ENCODE measurements at regions of chr5 and their contacts with region 1.

Region 1: DNA sequence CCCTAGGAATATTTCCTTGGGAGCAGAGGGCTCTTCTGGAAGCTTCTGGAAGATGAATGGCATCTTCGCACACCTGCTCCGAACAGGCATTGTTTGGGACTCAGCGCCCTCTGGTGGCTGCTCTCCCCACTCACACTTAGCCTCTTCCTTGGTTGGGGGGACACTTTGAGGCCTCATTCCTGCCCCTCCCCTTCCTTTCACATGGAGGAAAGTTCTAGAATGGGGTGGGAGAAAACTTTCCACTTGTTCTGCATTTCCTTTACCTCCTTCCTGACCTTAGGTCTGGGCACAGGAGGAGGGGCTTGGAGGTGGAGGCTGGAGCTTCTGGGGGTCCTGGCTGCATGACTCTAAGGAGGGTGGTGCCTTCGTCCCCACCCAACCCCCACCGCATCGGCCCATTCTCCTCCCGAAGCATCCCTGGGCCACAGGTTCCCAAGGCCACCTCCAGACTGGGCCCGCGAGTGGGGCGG is 19.3 kb upstream of the SMIM32 start:
- DNase-seq: peak; percentile 81
- H3K4me3 ChIP-seq: no peak overlapping the region; a peak in 1 of 4 replicates
- H3K27ac ChIP-seq: no peak overlapping the region
- H3K4me1 ChIP-seq: no peaks in the 10 kb centered on the region
- H3K27me3 ChIP-seq: no peaks in the 10 kb centered on the region
- CTCF ChIP-seq: peak; percentile 94
- EP300 ChIP-seq: no peak; a peak in 1 of 4 replicates
- RAD21 ChIP-seq: peak; percentile 83

Region 2: DNA sequence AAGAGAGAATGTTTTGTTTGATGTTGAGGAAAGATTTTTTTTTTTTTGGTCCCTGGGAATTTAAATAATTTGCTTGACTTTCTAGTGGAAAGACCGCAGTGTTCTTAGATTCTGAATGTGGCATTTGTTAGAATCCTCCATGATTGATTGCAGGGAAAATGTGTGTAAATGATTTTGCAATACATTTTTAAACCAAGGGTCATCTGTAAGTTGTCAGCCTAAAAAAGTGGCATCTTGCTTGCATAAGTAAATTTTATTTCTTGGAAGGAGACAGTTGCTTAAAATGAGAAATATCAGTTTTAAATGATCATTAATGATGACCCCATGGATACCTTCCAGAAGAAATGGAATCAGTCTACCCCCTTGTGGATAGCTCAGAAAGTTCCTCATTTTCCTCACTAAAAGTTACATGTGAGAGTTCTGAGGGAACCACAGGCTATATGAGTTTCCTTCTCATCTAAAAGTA is 482.9 kb before region 1 on chr5:
- CTCF ChIA-PET with region 1: no interaction called
- POLR2A ChIA-PET with region 1: no interaction called
- DNase-seq: no peak
- H3K4me3 ChIP-seq: no peak overlapping the region
- H3K27ac ChIP-seq: no peak overlapping the region
- H3K4me1 ChIP-seq: no peaks in the 10 kb centered on the region
- H3K27me3 ChIP-seq: no peaks in the 10 kb centered on the region
- CTCF ChIP-seq: peak; percentile 36
- EP300 ChIP-seq: no peak
- RAD21 ChIP-seq: peak; percentile 44; the same call in 1 of the 2 replicates

Region 3: DNA sequence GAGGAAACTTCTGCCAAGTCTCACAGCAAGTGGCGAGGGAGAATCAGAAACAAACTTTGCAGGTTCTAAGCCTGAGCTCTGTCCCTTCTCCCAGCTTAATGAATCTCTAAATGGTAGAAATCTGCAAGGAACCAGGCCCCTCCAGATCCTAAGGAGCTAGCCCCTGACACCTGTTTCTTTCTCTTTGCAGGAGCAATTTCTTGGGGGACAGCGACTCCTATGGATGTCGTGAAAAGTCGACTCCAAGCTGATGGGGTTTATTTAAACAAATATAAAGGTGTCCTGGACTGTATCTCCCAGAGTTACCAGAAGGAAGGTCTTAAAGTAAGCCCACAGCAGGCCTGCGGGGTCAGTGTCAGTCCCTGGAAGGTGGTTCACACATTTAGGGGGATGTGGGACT is 338.5 kb before region 1 on chr5:
- CTCF ChIA-PET with region 1: interaction called, 12 read pairs
- POLR2A ChIA-PET with region 1: no interaction called
- DNase-seq: no peak
- H3K4me3 ChIP-seq: no peak overlapping the region
- H3K27ac ChIP-seq: no peak overlapping the region
- H3K4me1 ChIP-seq: peaks cover 0 to 10% of the 10 kb centered on the region in 2 experiments; a peak in 1 of 4 replicates
- H3K27me3 ChIP-seq: no peaks in the 10 kb centered on the region
- CTCF ChIP-seq: no peak
- EP300 ChIP-seq: no peak
- RAD21 ChIP-seq: no peak

Region 4: DNA sequence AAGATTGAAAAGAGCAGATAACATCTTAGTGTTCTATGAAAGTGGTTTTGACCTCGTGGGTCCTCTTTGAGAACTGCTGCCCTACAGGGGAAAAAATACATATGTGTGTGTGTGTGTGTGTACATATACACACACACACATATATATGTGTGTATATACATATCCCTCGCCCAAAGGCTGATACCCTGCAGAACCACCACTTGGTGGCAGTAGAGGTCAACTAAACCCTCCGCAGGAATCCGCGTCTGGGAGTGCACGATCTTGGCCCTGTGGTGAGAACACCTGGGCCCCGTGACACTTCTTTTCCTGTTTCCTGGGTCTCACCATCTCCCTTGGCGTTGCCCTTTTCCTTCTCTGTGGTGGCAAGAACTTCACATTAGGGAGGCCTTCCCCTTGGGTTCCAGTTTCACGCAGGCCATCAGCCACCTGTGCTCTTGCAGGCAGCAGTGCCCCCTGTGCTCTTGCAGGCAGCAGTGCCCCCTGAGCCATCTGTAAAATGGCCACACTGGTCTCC is 324.9 kb before region 1 on chr5:
- CTCF ChIA-PET with region 1: interaction called, 104 read pairs
- POLR2A ChIA-PET with region 1: no interaction called
- DNase-seq: peak; percentile 78
- H3K4me3 ChIP-seq: 0 out of 4 replicates have a peak overlapping the region, but pooled peaks of 1 of the 2 experiments have one; percentile 3
- H3K27ac ChIP-seq: no peak overlapping the region
- H3K4me1 ChIP-seq: peaks cover 0 to 5% of the 10 kb centered on the region in 2 experiments; a peak in 1 of 4 replicates
- H3K27me3 ChIP-seq: no peaks in the 10 kb centered on the region
- CTCF ChIP-seq: peak; percentile 95
- EP300 ChIP-seq: no peak
- RAD21 ChIP-seq: peak; percentile 95

Region 5: DNA sequence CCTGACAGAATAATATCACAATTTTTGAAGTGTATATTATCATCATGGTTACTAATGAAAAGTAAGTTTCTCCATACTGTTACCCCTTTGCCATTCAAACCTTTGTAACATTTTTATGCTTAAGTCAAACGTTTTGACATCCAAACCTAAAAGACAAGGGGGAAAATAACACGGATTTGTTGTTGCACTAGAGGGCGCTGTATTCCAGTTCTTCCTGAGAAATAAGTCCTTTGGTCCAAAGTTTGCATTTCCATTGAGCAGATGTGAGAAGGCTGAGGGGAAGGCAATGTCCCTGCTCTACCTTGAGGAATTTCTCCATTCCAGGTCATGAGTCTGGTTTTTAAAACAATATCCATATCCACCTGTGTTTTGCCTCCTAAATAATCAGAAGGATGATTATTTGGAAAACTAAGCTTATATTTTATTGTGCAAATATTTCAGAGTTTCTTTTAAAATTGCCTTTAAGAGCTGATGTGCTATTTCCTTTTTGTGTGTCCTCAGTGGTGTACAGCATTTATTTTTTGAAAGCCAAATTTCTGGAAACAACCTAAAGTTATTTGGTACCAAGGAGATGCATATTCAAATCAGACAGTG is 267.2 kb before region 1 on chr5:
- CTCF ChIA-PET with region 1: interaction called, 19 read pairs
- POLR2A ChIA-PET with region 1: no interaction called
- DNase-seq: peak; percentile 66
- H3K4me3 ChIP-seq: no peak overlapping the region
- H3K27ac ChIP-seq: peak overlapping the region; percentile 35 to 47; a peak in 2 of 4 replicates
- H3K4me1 ChIP-seq: no peaks in the 10 kb centered on the region
- H3K27me3 ChIP-seq: no peaks in the 10 kb centered on the region
- CTCF ChIP-seq: peak; percentile 86
- EP300 ChIP-seq: no peak
- RAD21 ChIP-seq: peak; percentile 96

Region 6: GRCh38 chr5:136080483-136081216 is 131.6 kb before region 1 on chr5:
- CTCF ChIA-PET with region 1: interaction called, 25 read pairs
- POLR2A ChIA-PET with region 1: no interaction called
- DNase-seq: no peak
- H3K4me3 ChIP-seq: no peak overlapping the region
- H3K27ac ChIP-seq: no peak overlapping the region
- H3K4me1 ChIP-seq: no peaks in the 10 kb centered on the region; a peak in 1 of 4 replicates
- H3K27me3 ChIP-seq: no peaks in the 10 kb centered on the region
- CTCF ChIP-seq: no peak
- EP300 ChIP-seq: no peak
- RAD21 ChIP-seq: no peak

Region 7: DNA sequence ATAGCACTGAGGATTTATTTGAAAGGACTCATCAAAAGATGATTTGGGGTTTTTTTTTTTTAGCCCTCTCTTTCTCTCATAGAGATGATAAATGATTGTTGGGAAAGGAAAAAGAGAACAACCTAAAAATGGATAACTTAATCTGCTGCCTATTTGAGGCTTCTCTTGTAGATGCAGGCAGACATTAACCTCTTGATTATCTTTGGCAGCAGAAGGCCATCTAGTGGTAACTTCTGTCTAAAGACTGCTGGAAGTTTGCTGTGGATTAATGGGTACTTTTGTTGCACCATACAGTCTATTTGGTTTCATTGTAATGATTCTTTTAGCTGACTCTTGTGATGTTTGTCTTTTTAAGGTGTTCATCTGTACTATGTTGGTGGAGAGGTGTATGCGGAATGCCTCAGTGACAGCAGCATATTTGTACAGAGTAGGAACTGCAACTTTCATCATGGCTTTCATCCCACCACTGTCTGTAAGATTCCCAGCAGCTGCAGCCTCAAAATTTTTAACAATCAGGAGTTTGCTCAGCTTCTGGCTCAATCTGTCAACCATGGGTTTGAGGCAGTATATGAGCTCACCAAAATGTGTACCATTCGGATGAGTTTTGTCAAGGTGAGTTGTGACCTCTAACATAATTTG is 38.1 kb before region 1 on chr5:
- CTCF ChIA-PET with region 1: interaction called, 11 read pairs
- POLR2A ChIA-PET with region 1: no interaction called
- DNase-seq: peak; percentile 48
- H3K4me3 ChIP-seq: no peak overlapping the region; a peak in 1 of 4 replicates
- H3K27ac ChIP-seq: peak overlapping the region in 1 of 2 experiments; percentile 43; a peak in 1 of 4 replicates
- H3K4me1 ChIP-seq: peaks cover 0 to 2% of the 10 kb centered on the region in 2 experiments; a peak in 1 of 4 replicates
- H3K27me3 ChIP-seq: no peaks in the 10 kb centered on the region
- CTCF ChIP-seq: peak; percentile 76
- EP300 ChIP-seq: 0 out of 4 replicates have a peak, but pooled peaks of 1 of the 2 experiments have one; percentile 12
- RAD21 ChIP-seq: peak; percentile 79

Region 8: DNA sequence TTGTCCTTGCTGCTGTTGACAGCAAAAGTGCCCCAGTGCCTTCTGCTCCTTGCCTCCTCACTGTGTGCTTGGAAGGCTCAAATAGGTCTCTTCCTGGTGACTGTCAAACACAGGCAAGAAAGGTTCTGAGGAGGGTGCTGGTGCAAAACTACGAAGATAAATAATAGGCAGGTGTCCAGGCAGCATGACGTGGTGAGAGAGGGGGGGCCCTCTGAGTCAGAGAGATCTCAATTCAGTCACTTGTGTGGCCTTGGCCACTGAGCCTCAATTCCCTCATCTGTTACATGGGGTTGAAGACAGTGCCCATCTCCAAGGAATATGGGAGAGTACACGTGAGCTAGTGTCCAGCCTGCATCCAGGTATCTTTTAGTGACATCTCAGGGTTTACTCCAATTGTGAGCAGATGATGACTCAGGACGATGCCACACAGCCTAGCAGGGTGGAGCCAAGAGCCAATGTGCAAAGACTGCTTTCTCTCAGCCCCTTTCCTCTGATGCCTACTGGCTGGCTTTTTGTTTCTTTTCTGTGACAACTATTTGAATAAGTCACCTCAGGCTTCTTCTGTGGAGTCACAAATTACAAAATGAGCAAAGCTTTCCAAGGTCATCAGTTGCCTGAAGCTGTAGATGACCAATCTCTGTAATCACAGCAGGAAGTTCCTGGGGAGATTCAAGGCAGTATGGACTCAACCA is 10.4 kb after region 1 on chr5:
- CTCF ChIA-PET with region 1: interaction called, 57 read pairs
- POLR2A ChIA-PET with region 1: no interaction called
- DNase-seq: no peak
- H3K4me3 ChIP-seq: no peak overlapping the region
- H3K27ac ChIP-seq: no peak overlapping the region
- H3K4me1 ChIP-seq: no peaks in the 10 kb centered on the region
- H3K27me3 ChIP-seq: no peaks in the 10 kb centered on the region
- CTCF ChIP-seq: no peak
- EP300 ChIP-seq: no peak
- RAD21 ChIP-seq: no peak

Region 9: DNA sequence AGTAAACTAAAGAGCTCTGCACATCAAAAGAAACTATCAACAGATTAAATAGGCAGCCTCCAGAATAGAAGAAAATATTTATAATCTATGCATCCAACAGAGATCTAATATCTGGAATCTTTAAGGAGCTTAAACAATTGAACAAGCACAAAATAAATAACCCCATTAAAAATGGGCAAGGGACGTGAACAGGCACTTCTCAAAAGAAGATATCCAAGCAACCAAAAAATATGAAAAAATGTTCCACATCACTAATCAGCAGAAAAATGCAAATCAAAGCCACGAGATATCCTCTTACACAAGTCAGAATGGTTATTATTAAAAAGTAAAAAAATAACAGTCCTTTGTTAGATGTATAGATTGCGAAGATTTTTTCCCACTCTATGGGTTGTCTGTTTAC is 262.2 kb after region 1 on chr5:
- CTCF ChIA-PET with region 1: no interaction called
- POLR2A ChIA-PET with region 1: no interaction called
- DNase-seq: no peak
- H3K4me3 ChIP-seq: no peak overlapping the region
- H3K27ac ChIP-seq: no peak overlapping the region
- H3K4me1 ChIP-seq: no peaks in the 10 kb centered on the region
- H3K27me3 ChIP-seq: no peaks in the 10 kb centered on the region
- CTCF ChIP-seq: no peak
- EP300 ChIP-seq: no peak
- RAD21 ChIP-seq: no peak

Measured in SK-N-SH (cell line).